ENCODE measurements at regions of chr10 and their contacts with region 1.

Region 1: DNA sequence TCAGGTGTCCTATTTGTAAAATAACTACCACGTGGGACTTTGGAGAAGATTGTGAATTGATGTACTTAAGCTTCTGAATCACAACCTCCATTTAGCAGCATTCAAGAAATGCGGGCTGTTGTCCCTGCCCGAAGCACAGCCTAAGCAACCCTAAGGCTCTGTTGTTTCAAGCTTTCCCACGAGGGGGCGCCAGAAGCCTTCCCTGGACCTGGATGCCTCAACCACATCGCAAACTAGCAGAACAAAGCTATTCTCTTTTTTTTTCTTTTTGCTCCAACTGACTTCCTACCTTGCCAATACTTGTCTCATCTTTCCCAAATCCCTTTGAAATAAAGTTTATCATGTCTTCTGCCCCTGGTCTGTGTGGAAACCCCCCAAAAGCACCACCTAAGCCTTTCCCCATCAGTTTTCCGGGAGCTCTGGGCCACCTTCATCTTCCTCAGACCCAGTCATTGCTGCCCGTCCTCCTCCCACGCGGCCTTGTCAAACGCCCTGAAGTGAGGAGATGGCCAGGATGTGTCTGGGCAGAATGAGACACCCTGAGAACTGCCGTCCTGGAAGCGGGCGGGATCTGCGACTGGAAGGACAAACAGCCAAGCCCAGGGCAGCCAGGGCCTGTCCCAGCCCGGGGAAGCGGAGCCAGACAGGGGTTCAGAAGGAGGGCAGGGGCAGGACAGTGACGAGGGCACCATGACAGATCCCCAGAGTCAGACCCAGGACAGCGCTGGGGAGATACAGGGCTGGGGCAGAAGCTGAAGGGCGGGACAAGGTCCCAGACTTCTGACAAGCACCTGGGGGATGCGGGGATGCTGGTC is 112.7 kb downstream of the SLIT1 start:
- DNase-seq: peak; percentile 79
- H3K4me3 ChIP-seq: no peak overlapping the region
- H3K27ac ChIP-seq: no peak overlapping the region
- H3K4me1 ChIP-seq: no peaks in the 10 kb centered on the region
- CTCF ChIP-seq: peak; percentile 96

Region 2: GRCh38 chr10:97117372-97117771 is 44.3 kb after region 1 on chr10:
- CTCF ChIA-PET with region 1: no interaction called
- POLR2A ChIA-PET with region 1: no interaction called
- intact Hi-C with region 1: loop called (anchors 1 kb)
- DNase-seq: peak; percentile 33
- H3K4me3 ChIP-seq: no peak overlapping the region
- H3K27ac ChIP-seq: no peak overlapping the region
- H3K4me1 ChIP-seq: no peaks in the 10 kb centered on the region
- CTCF ChIP-seq: peak; percentile 78

Region 3: DNA sequence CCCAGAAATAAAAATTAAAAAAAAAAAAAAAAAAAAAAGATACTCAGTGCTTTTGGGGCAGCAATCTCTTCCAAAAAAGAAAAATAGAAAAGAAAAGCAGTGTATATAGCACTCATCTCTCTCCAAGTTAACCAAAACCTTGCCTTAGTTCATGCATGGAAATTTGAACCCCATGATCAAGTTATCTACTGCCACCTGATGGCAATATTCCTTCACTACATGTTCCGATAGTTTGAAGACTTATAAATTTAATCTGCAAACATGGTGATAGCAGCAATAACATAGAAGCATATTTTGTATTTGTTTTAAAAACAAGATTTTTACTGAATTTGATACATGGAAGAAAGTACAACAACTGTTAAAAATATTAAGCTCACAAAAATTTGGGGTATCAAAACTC is 161.3 kb after region 1 on chr10:
- CTCF ChIA-PET with region 1: interaction called, 8 read pairs
- POLR2A ChIA-PET with region 1: no interaction called
- intact Hi-C with region 1: loop called (anchors 2 kb)
- DNase-seq: peak; percentile 53
- H3K4me3 ChIP-seq: no peak overlapping the region
- H3K27ac ChIP-seq: no peak overlapping the region
- H3K4me1 ChIP-seq: no peaks in the 10 kb centered on the region
- CTCF ChIP-seq: peak; percentile 90

Region 4: DNA sequence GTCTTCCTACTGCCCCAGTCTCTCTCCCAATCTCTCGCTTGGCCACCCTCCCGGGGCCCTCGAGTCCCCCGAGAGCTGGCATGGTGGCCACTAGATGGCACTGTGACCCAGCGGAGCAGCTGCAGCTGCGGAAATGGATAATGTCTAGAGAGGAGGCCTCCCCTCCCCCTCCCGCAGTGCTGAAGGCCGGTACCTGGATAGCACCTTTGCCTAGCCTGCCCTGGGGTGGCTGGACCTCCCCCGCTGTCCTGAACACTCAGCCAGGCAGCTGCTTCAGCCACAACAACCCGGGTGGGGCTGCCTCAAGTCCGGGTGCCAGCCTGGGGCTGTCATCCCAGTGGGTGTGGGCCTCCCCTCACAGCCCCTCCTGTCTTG is 841.8 kb after region 1 on chr10:
- CTCF ChIA-PET with region 1: no interaction called
- POLR2A ChIA-PET with region 1: no interaction called
- intact Hi-C with region 1: no loop called
- DNase-seq: peak; percentile 80
- H3K4me3 ChIP-seq: no peak overlapping the region
- H3K27ac ChIP-seq: no peak overlapping the region
- H3K4me1 ChIP-seq: no peaks in the 10 kb centered on the region
- CTCF ChIP-seq: peak; percentile 93